Spleen (tissue), 13 donors: ENCODE measurements at regions of chr18 and their contacts with region 1.

Region 1: GRCh38 chr18:21612125-21612991 is at the start of gene SNRPD1:
- DNase-seq: peak; percentile 98
- H3K4me3 ChIP-seq: peak within 1 kb of the TSS; percentile 70 to 96 (median 88)
- H3K27ac ChIP-seq: peak within 1 kb of the TSS; percentile 73 to 89 (median 86)
- H3K4me1 ChIP-seq: peaks cover 9 to 51% (median 28%) of the 10 kb centered on the region in 6 donors
- H3K27me3 ChIP-seq: no peaks in the 10 kb centered on the region
- CTCF ChIP-seq: peak; percentile 91 to 99 (median 97)
- POLR2A ChIP-seq: peak in 1 of 3 donors; percentile 7
- total RNA-seq, gene SNRPD1: 5.6 to 52.6 (median 28.7) TPM

Region 2: GRCh38 chr18:21682371-21683051 is 70.2 kb after region 1 on chr18:
- intact Hi-C with region 1: no loop called
- DNase-seq: no peak
- H3K4me3 ChIP-seq: peak overlapping the region in 7 of 8 donors; percentile 15 to 70 (median 28)
- H3K27ac ChIP-seq: peak overlapping the region; percentile 43 to 91 (median 84)
- H3K4me1 ChIP-seq: peaks cover 9 to 62% (median 34%) of the 10 kb centered on the region in 6 donors
- H3K27me3 ChIP-seq: no peaks in the 10 kb centered on the region
- CTCF ChIP-seq: no peak
- POLR2A ChIP-seq: no peak

Region 3: DNA sequence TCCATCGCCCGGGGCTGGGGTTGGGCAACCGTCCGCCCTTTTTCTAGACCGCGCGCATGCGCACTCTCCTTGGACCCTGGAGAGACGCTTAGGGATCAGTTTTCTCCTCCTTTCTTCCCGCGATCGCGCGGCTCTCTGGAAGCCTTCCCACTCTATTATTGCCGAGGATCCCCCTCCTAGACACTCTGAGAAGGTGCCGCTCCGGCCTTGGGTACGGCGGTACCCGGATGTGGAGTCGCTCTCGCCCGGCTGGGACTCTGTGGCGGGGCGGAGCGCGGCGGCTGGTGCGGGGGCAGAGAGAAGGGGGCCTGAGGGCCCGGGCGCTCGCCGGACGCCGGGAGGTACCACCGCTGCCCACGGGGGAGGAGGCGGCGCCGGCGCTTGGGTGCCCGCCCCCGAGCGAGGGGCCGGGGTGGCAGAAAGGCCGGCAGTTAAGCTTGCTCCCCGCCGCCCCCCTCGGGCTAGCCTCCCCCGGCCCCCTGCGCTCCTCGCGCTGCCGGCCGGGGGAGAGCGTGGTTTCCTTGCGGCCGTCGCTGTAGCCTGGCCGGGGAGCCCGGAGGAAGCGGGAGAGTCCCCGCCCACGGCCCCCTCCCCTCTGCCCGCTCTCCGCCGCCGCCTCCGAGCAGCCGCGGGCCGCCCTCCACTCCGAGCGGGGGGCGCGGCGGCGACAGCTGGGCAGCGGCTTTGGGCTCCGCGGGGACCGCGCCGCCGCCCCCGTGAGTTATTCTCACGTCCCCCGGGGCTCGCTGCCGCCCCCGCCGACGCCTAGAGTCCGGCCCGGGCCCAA is 128.6 kb after region 1 on chr18 and contains the start of gene MIB1:
- intact Hi-C with region 1: loop called (anchors 10 kb)
- DNase-seq: no peak
- H3K4me3 ChIP-seq: peak within 1 kb of the TSS; percentile 78 to 98 (median 93)
- H3K27ac ChIP-seq: peak within 1 kb of the TSS; percentile 92 to 99 (median 98)
- H3K4me1 ChIP-seq: peaks cover 6 to 53% (median 33%) of the 10 kb centered on the region in 6 donors
- H3K27me3 ChIP-seq: no peaks in the 10 kb centered on the region
- CTCF ChIP-seq: no peak
- POLR2A ChIP-seq: peak in 1 of 3 donors; percentile 40
- total RNA-seq, gene MIB1: 22.0 to 33.3 (median 28.7) TPM